ENCODE measurements at regions of chr11 and their contacts with region 1.

Region 1: GRCh38 chr11:20127671-20128527 is 32.4 kb downstream of the DBX1 start:
- DNase-seq: no peak
- H3K4me3 ChIP-seq: no peak overlapping the region
- CTCF ChIP-seq: peak; percentile 86

Region 2: DNA sequence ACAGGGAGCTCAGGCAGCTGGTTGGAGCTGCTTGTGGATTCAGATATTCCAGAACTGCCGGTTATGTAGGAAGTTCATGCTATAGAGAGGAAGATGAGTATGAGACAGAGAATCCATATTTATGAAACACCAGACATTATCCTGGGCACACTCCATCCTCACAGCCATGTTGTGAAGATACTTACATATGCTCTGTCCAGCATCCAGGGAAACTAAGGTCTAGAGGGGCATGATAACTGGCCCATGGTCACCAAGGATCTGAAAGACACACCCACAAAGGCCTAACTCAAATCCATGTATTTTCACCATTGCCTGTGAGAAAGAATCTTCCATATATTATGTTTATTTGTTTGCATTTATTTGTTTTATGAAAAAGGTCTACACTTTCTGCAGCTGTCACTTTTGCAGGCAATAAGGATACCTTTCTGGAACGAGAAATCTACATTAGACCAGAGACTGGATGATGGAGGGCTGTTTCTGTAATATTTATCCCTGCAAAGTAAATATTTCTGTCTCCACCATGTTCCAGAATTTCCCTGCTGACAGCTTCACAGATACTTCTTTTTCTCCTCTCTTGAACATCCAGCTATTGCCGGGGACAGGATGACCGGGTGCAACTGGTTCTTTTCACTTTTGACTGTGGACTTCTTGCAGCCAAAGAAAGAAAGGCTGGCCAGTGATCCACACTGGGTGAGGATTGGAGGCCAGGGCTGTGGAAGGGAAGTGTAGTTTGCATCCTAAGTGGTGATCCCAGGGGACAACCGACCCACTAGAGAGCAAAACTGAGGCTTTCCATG is 561.1 kb before region 1 on chr11:
- CTCF ChIA-PET with region 1: interaction called, 14 read pairs
- POLR2A ChIA-PET with region 1: no interaction called
- DNase-seq: no peak
- H3K4me3 ChIP-seq: no peak overlapping the region
- CTCF ChIP-seq: no peak

Region 3: DNA sequence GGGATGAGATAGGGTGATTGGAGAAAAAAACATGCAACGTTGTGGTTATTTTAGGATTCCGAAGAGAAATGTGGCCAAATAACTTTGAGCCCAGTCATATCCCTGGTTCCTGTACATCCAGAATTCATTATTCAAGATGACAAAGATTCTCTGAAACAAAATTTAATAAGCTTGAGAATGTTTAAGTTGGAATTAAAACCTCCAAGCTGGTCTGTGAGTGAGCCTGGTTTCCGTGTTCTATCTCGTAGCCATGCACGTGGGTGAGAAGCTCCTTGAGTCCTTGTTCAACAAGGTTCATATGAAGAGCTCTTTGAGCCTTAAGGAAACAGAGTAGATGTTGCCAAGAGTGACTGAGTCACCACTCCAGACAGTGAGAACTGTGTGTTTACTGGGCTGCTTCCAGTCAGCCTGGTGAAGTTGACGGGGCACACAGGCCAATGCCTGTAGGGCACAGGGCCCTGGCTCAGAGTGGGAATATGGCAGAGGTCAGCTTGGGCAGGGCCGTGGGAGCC is 208.8 kb before region 1 on chr11:
- CTCF ChIA-PET with region 1: interaction called, 50 read pairs
- POLR2A ChIA-PET with region 1: no interaction called
- DNase-seq: peak; percentile 99
- H3K4me3 ChIP-seq: no peak overlapping the region
- CTCF ChIP-seq: no peak

Region 4: DNA sequence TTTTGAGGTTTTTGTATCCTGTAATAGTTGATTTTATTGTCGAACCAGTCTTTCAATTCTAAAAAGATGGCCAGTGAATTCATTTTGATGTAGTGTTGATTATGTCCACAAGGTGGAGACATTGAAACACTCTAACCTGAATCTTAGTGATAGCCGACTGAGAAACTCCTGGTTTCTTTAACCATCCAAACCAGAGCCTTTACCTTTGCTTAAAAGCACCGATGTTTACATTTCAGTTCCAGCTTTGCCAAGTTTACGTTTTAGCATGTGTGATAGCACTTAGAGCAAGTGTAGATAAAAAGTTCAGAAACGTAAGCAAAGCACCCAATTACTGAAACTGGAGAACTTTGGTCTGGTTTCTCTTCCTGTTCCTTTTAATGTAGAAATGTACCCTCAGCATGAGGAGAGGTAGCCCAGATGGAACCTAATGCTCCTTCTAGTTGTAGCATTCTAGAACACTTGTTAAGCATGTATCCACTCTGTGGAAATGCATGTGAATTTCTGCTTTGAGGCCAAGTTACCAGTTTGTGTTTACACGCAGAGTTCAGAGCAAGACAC is 176.3 kb before region 1 on chr11:
- CTCF ChIA-PET with region 1: interaction called, 226 read pairs
- POLR2A ChIA-PET with region 1: no interaction called
- DNase-seq: no peak
- H3K4me3 ChIP-seq: no peak overlapping the region
- CTCF ChIP-seq: peak; percentile 30

Region 5: GRCh38 chr11:20048211-20048610 is 79.7 kb before region 1 on chr11:
- CTCF ChIA-PET with region 1: interaction called, 10 read pairs
- POLR2A ChIA-PET with region 1: no interaction called
- DNase-seq: no peak
- H3K4me3 ChIP-seq: no peak overlapping the region
- CTCF ChIP-seq: no peak

Region 6: GRCh38 chr11:20154381-20154780 is 26.5 kb after region 1 on chr11:
- CTCF ChIA-PET with region 1: interaction called, 22 read pairs
- POLR2A ChIA-PET with region 1: no interaction called
- DNase-seq: peak; percentile 23
- H3K4me3 ChIP-seq: no peak overlapping the region
- CTCF ChIP-seq: no peak

Region 7: DNA sequence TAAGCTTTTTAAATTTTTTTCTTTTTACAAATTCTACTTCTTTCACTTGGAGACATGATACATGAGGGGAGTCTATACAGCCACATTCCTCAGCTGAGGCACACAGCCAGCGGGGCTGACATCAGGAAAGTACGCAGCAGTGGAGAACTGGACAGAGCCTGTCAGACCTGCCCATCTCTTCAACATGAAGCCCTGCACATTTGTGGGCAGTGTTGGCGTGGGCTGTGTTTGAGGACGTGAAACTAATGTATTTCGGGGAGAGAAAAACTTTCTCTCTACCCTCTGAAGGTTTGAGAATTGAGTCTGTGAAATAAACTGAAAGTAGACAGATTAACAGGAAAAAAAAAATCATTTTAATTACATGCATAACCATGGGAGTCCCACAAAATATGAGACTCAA is 150.8 kb after region 1 on chr11:
- CTCF ChIA-PET with region 1: no interaction called
- POLR2A ChIA-PET with region 1: no interaction called
- DNase-seq: no peak
- H3K4me3 ChIP-seq: no peak overlapping the region
- CTCF ChIP-seq: no peak